ENCODE measurements at regions of chr3 and their contacts with region 1.

Region 1: DNA sequence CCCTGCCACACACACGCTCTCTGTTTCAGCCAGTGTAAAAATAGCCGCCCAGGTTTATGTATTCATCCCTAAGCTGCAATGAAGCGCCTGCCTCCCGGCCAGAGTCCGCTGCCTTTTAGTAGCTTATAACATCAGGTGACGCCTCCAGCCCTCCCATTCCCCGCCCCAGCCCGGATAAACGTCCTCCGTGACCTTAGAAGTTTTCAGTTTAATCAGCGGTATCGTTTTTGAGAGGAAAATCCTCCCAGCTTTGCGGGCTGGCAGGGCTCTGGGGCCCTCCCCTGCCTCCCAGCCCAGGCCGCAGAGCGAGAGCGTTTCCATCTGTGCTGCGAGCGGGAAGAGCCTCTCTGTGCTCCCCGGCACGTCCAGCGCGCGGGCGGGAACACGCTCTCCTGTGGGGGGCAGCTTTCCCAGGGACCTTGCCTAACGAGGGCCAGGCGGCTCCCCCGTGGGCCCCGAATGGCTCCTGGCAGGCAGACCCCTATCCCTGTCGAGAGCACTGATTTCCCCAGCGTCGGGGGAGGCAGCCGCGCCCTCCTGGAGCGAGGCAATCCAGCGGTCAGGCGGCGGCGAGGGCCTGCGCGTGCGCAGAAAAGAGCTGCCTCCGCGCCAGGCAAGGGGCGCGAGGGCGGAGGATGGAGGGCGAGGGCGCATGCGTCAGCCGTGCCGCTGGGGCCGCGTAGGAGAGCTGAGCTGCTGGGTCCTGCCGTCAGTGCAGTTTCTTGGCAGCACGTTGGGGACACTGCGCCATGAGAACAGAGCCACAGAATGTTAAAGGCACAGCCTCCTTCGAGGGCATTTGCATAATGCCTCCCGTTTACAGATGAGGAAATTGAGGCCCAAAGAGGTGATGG is 71.1 kb downstream of the CCNL1 start:
- DNase-seq: peak; percentile 98

Region 2: GRCh38 chr3:156674046-156674910 is 414.6 kb before region 1 on chr3 and contains the start of gene TIPARP:
- CTCF ChIA-PET with region 1: no interaction called
- POLR2A ChIA-PET with region 1: interaction called, 11 read pairs
- DNase-seq: peak; percentile 94

Region 3: DNA sequence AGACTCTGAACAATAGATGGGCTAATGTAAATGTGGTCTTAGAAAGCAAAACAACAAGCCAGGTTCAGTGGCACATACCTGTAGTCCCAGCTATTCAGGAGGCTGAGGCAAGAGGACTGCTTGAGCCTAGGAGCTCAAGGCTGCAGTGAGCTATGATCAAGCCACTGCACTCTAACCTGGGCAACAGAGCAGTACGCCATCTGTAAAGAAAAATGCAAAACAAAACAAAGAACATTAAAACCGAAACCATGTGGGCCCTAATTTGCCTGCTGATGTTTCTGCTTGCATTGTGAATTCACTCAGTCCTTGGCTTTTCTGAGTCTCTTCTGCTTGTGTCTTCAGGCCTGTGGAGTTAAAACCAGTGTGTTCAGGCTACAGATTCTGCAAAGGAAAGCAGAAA is 14.5 kb after region 1 on chr3:
- CTCF ChIA-PET with region 1: no interaction called
- POLR2A ChIA-PET with region 1: interaction called, 11 read pairs
- DNase-seq: no peak

Region 4: DNA sequence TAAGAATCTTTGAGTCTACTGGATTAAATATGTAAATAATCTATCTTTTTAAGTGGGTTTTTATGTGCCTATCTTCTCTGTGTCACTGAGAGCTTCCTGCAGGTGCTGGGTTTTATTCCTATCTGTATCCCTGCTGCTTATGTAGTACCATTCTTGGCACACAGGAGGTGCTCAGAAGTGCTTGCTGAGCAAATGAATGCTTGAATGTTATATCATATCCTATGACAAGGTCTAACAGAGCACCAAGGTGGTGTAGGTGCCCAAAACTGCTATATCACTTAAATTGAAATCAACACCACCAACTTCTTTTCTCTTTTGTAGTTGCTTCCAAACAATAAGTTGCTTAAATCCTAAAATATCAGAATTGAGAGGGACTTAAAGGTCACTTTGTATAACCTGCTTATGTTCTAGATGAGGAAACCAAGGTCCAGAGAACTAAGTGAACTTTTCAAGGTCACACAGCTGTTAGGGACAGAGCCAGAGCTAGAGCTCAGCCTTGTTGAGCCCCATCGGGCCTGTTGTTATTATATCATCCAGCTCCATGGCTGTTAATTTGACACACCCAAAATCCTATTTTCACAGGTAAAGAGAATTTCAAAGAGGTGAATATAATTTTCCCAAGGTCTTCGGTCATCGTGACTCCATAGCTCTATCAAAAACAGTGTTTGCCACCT is 25.1 kb after region 1 on chr3:
- CTCF ChIA-PET with region 1: interaction called, 3 read pairs
- POLR2A ChIA-PET with region 1: interaction called, 15 read pairs
- DNase-seq: peak; percentile 27

Region 5: GRCh38 chr3:157130467-157131251 is 41.8 kb after region 1 on chr3:
- CTCF ChIA-PET with region 1: interaction called, 4 read pairs
- POLR2A ChIA-PET with region 1: interaction called, 51 read pairs
- DNase-seq: peak; percentile 54

Region 6: DNA sequence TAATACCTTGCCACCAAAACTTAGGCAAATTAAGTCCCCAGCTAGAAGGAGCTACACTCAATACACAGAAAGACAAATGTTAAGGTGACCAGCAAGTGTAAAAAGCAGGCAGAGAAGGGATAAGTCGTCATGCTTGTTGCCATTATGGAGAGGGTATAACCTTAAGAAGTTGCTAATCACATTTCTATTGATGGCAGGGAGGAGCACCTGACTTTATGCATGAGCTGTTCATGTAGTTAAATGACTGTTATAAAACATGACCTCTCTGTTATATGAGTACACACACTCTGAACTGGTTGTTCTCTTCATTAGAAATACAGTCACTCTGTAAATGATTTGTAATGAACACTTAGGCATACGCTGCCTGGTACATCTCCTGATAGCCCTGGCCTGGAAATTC is 77.7 kb after region 1 on chr3:
- CTCF ChIA-PET with region 1: no interaction called
- POLR2A ChIA-PET with region 1: no interaction called
- DNase-seq: no peak